Natural killer cell (primary cell): ENCODE measurements at regions of chr19 and their contacts with region 1.

Region 1: GRCh38 chr19:57708641-57709361 is at the start of gene ZNF154:
- DNase-seq: peak; percentile 54 to 63
- ATAC-seq: peak; percentile 67 to 89 (median 87)
- H3K4me3 ChIP-seq: peak within 1 kb of the TSS; percentile 56
- H3K4me3 Mint-ChIP-seq: peak within 1 kb of the TSS; percentile 86
- H3K27ac ChIP-seq: peak within 1 kb of the TSS; percentile 90
- H3K27ac Mint-ChIP-seq: peak within 1 kb of the TSS; percentile 83 to 99
- H3K4me1 ChIP-seq: peaks cover 14% of the 10 kb centered on the region
- H3K4me1 Mint-ChIP-seq: peaks cover 7 to 53% of the 10 kb centered on the region in 2 donors
- H3K27me3 ChIP-seq: no peaks in the 10 kb centered on the region
- H3K27me3 Mint-ChIP-seq: no peaks in the 10 kb centered on the region
- CTCF ChIP-seq: no peak
- total RNA-seq, gene ZNF154: 4.2 to 21.6 (median 9.5) TPM

Region 2: DNA sequence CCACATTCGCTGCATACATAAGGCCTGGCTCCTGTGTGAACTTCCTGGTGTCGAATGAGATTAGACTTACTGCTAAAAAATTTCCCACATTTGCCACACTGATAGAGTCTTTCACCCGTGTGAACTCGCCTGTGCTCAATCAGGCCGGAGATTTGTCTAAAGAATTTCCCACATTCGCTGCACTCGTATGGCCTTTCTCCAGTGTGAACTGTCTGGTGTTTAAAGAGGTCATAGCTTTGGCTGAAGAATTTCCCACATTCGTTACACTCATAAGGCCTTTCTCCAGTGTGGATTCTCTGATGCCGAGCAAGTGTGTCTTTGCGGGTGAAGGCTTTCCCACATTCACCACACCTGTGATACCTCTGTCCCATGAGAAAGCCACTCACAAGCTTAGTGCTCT is 12.1 kb after region 1 on chr19:
- intact Hi-C with region 1: loop called (anchors 2 kb)
- DNase-seq: no peak
- ATAC-seq: no peak
- H3K4me3 ChIP-seq: no peak overlapping the region
- H3K4me3 Mint-ChIP-seq: no peak overlapping the region
- H3K27ac ChIP-seq: no peak overlapping the region
- H3K27ac Mint-ChIP-seq: no peak overlapping the region
- H3K4me1 ChIP-seq: no peaks in the 10 kb centered on the region
- H3K4me1 Mint-ChIP-seq: peaks cover 5 to 16% of the 10 kb centered on the region in 2 donors
- H3K27me3 ChIP-seq: no peaks in the 10 kb centered on the region
- H3K27me3 Mint-ChIP-seq: no peaks in the 10 kb centered on the region
- CTCF ChIP-seq: no peak